Left ventricle myocardium superior (tissue), 1 donor: ENCODE measurements at regions of chr6 and their contacts with region 1.

Region 1: GRCh38 chr6:152129691-152130151 is 322.2 kb downstream of the ESR1 start:
- DNase-seq: peak; percentile 47
- ATAC-seq: peak; percentile 82

Region 2: DNA sequence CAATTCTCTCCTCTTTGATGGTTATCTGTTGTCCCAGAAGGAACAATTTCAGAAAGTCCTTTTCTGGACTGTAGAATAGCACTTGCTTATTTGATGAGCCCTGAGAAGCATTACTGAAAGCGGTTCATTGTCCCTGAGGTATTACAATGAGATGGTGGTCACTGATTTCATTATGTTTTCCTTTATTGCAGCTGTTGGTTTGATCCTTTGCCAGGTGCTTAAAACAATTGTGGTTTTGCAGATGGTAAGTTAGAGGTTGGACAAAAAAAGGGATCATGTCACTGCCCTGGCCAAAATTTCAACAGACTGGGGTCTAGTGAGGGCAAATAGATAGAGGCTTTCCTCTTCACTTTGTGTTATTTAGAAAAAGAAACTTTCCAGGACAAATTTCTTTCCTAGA is 260.4 kb before region 1 on chr6:
- intact Hi-C with region 1: no loop called
- DNase-seq: no peak
- ATAC-seq: peak; percentile 64

Region 3: DNA sequence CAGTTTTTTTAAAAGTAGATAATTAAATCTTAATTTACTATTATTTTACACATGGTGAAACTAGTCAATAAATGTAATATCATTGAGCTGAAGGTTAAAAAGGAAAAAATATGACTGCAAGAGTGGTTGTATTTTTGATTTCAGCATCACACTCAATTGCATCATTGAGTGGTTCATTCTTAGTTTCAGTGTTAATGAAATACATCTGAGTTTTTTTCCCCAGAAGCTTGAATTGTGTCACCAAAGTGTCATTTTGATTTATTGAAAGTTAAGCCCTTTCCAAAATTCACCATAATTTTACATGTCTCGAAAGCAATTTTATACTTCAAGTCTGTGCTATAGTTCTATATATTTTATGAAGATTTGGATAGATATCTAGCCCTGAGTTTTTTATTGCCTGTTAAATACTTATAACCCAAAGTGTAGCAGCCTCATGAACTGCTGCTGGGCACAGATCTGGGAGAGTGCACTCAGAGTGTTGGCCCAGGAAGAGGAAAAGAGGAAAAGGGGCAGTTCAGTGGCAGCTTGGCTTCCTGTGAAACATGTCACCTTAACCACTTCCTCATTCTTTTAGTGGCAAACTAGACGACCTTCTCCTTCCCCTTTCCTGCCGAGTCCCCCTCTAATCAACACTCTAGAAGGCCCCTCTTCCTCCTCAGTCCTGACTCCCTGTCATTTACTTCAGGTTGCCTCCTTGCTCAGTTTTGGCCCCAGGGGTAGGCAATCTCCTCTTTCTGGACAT is 181.5 kb before region 1 on chr6:
- intact Hi-C with region 1: no loop called
- DNase-seq: no peak
- ATAC-seq: no peak

Region 4: GRCh38 chr6:152316024-152316423 is 186.3 kb after region 1 on chr6:
- intact Hi-C with region 1: no loop called
- DNase-seq: peak; percentile 53
- ATAC-seq: peak; percentile 76

Region 5: GRCh38 chr6:152338335-152339125 is 208.8 kb after region 1 on chr6:
- intact Hi-C with region 1: loop called (anchors 10 kb)
- DNase-seq: peak; percentile 76
- ATAC-seq: peak; percentile 79

Region 6: GRCh38 chr6:152598901-152599537 is 469.3 kb after region 1 on chr6:
- intact Hi-C with region 1: no loop called
- DNase-seq: no peak
- ATAC-seq: peak; percentile 90